ENCODE measurements at regions of chr7 and their contacts with region 1.

Region 1: GRCh38 chr7:23597094-23598091 is at the start of gene CCDC126:
- DNase-seq: peak; percentile 96
- H3K4me3 ChIP-seq: peak within 1 kb of the TSS; percentile 75 to 90 (median 84)
- H3K27ac ChIP-seq: peak within 1 kb of the TSS; percentile 95 to 99 (median 96)
- H3K4me1 ChIP-seq: peaks cover 12 to 37% (median 32%) of the 10 kb centered on the region in 4 donors
- H3K27me3 ChIP-seq: no peaks in the 10 kb centered on the region
- CTCF ChIP-seq: no peak
- EP300 ChIP-seq: no peak
- POLR2A ChIP-seq: no peak
- total RNA-seq, gene CCDC126: 14.6 to 21.2 (median 16.4) TPM

Region 2: GRCh38 chr7:23672033-23672432 is 74.6 kb after region 1 on chr7:
- intact Hi-C with region 1: loop called (anchors 2 kb)
- DNase-seq: no peak
- H3K4me3 ChIP-seq: no peak overlapping the region
- H3K27ac ChIP-seq: no peak overlapping the region
- H3K4me1 ChIP-seq: no peaks in the 10 kb centered on the region
- H3K27me3 ChIP-seq: no peaks in the 10 kb centered on the region
- CTCF ChIP-seq: no peak
- EP300 ChIP-seq: no peak
- POLR2A ChIP-seq: no peak

Region 3: DNA sequence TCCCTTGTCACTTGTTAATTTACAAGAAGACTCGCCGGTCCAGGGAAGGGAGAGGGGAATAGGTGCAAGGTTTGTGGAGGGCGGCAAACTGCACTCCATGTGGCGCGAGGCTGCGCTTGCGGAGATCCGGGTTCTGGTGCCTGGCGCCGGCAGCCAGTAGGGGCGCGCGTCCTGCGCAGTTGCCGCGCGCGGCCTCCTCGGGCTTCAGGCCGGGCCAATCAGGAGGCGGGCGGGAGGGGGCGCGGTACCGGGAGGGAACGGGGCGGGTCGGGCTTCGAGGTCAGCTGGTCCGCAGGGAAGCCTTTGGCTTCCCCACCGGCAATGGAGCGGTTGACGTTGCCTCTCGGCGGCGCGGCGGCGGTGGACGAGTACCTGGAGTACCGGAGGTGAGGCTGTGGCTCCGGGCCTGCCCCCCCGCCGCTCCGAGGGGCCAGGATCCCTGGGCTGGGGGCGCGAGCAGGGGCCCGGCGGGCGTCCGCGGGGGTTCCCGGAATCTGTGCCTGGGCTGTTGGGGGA is 82.6 kb after region 1 on chr7 and contains the start of gene FAM221A:
- intact Hi-C with region 1: loop called (anchors 2 kb)
- DNase-seq: peak; percentile 93
- H3K4me3 ChIP-seq: peak within 1 kb of the TSS; percentile 70 to 94 (median 88)
- H3K27ac ChIP-seq: peak within 1 kb of the TSS; percentile 88 to 95 (median 91)
- H3K4me1 ChIP-seq: peaks cover 7 to 21% (median 16%) of the 10 kb centered on the region in 4 donors
- H3K27me3 ChIP-seq: no peaks in the 10 kb centered on the region
- CTCF ChIP-seq: peak; percentile 50 to 89 (median 65)
- EP300 ChIP-seq: no peak
- POLR2A ChIP-seq: peak; percentile 18
- total RNA-seq, gene FAM221A: 4.6 to 13.3 (median 7.3) TPM

Measured in esophagus muscularis mucosa (tissue), 4 donors.